Activated CD8-positive, alpha-beta memory T cell treated with anti-CD3 and anti-CD28 coated beads, Interleukin-2, amount 10 ng/mL, durations not matched to agents 7 days and 5 days (primary cell): ENCODE measurements at regions of chr17 and their contacts with region 1.

Region 1: GRCh38 chr17:1628856-1629646 is 417 bp upstream of the SLC43A2 start:
- DNase-seq: peak; percentile 94
- ATAC-seq: peak; percentile 83
- H3K4me3 Mint-ChIP-seq: peak overlapping the region; percentile 81
- H3K27ac Mint-ChIP-seq: peak overlapping the region; percentile 72
- H3K4me1 Mint-ChIP-seq: peaks cover 7% of the 10 kb centered on the region
- H3K27me3 Mint-ChIP-seq: peaks cover 38% of the 10 kb centered on the region

Region 2: GRCh38 chr17:1555651-1556471 is 73.2 kb before region 1 on chr17:
- CTCF ChIA-PET with region 1: no interaction called
- DNase-seq: no peak
- ATAC-seq: no peak
- H3K4me3 Mint-ChIP-seq: no peak overlapping the region
- H3K27ac Mint-ChIP-seq: no peak overlapping the region
- H3K4me1 Mint-ChIP-seq: peaks cover 19% of the 10 kb centered on the region
- H3K27me3 Mint-ChIP-seq: no peaks in the 10 kb centered on the region

Region 3: GRCh38 chr17:1573916-1574696 is 54.9 kb before region 1 on chr17:
- CTCF ChIA-PET with region 1: interaction called, 89 read pairs
- DNase-seq: peak; percentile 75
- ATAC-seq: peak; percentile 84
- H3K4me3 Mint-ChIP-seq: no peak overlapping the region
- H3K27ac Mint-ChIP-seq: no peak overlapping the region
- H3K4me1 Mint-ChIP-seq: peaks cover 1% of the 10 kb centered on the region
- H3K27me3 Mint-ChIP-seq: no peaks in the 10 kb centered on the region

Region 4: GRCh38 chr17:1606352-1607033 is 22.6 kb before region 1 on chr17:
- CTCF ChIA-PET with region 1: interaction called, 10 read pairs
- DNase-seq: no peak
- ATAC-seq: no peak
- H3K4me3 Mint-ChIP-seq: no peak overlapping the region
- H3K27ac Mint-ChIP-seq: no peak overlapping the region
- H3K4me1 Mint-ChIP-seq: peaks cover 13% of the 10 kb centered on the region
- H3K27me3 Mint-ChIP-seq: no peaks in the 10 kb centered on the region

Region 5: DNA sequence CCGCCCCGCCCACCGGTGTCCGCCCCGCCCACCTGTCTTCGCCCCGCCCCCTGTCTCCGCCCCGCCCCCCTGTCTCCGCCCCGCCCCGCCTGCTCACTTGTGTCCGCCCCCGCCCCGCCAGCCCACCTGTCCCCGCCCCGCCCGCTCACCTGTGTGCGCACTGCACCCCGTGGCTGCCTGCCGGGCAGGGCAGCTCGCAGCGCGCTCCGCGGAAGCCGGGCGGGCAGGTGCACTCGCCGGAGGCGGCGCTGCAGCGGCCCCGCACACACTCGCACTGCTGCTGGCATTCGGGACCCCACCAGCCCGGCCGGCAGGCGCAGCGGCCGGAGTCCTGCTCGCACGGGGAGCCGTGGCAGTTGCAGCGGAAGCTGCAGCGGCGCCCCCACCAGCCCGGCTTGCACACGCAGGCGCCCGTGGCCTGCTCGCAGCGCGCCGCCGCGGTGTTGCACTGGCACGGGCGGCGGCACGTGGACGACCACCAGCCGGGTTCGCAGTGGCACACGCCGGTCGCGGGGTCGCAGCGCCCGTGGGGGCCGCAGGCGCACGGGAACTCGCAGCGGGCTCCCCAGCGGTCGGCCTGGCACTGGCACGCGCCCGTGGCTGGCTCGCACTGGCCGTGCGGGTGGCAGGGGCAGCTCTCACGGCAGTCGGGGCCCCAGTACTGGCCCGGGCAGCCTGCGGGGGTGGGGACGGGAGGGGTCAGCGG is 14.4 kb after region 1 on chr17:
- CTCF ChIA-PET with region 1: interaction called, 25 read pairs
- DNase-seq: peak; percentile 59
- ATAC-seq: peak; percentile 61
- H3K4me3 Mint-ChIP-seq: no peak overlapping the region
- H3K27ac Mint-ChIP-seq: no peak overlapping the region
- H3K4me1 Mint-ChIP-seq: peaks cover 18% of the 10 kb centered on the region
- H3K27me3 Mint-ChIP-seq: no peaks in the 10 kb centered on the region